ENCODE measurements at regions of chr9 and their contacts with region 1.

Region 1: GRCh38 chr9:128215491-128216404 is 12.6 kb downstream of the DNM1 start:
- DNase-seq: peak; percentile 66
- H3K4me3 ChIP-seq: no peak overlapping the region
- H3K27me3 ChIP-seq: no peaks in the 10 kb centered on the region
- CTCF ChIP-seq: no peak

Region 2: DNA sequence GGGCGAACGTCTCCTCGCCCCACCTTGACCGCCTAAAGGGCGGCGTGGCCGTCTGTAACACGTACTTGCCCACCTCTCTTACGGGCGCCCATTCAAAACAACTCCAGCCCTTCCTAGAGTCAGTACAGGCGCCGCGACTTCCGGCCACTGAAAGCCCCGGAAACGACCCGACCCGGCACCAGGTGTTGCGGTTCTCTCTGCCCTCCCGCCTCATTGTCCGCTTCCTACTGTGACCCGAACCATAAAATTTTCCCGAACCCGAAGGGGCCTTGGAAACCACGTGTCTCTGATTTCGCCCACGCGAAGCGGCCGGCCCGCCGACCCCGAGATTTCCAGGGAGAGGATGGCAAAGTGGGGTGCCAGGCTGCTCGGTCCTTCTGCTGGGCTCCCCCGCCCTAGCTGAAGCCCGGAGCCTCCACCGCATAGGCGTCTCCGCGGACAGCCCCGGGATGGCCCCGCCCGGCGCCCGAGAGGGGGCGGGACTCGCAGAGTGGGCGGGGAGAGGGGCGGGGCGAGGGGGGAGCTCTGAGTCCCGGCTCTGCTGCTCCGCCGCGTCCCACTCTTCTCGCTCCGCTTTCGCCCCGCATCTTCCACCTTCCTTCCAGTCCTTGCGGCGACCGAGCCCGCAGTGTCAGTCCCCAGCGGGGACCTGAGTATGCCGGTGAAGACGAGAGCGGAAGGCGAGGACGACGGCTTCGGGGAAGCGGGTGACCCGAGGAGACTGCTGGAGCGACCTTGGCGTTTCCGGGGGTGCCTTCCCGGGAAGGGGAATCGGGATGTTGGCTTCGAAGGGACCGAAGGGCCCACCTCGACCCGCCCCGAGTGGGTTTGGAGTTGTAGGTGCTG is 87.5 kb before region 1 on chr9:
- CTCF ChIA-PET with region 1: no interaction called
- POLR2A ChIA-PET with region 1: no interaction called
- DNase-seq: peak; percentile 38
- H3K4me3 ChIP-seq: peak overlapping the region; percentile 90
- H3K27me3 ChIP-seq: peaks cover 8% of the 10 kb centered on the region
- CTCF ChIP-seq: no peak

Region 3: DNA sequence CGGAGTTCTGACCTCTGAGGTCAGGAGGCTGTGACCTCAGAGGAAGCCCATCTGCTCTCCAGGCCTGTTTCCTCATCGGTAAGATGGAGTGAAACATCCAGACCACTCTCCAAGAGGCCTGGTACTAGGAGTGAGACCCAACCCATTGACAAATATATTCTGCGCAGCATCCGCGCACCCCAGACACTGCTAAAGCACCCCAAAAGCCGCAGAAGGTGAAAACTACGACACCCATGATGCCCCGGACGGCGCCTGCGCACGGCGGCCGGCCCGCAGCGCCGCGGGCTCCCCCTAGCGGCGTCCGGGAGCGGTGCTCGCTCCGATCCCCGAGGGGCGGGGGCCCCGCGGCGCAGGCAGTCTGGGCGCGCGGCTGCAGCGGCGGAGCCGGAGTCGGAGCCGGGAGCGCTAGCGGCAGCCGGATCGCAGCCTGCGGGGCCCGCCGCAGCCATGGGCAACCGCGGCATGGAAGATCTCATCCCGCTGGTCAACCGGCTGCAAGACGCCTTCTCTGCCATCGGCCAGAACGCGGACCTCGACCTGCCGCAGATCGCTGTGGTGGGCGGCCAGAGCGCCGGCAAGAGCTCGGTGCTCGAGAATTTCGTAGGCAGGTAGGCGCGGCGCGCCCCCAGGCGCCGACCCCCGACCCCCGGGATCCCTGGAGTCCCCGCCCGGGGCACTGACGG is 12.6 kb before region 1 on chr9 and contains the start of gene DNM1:
- CTCF ChIA-PET with region 1: interaction called, 10 read pairs
- POLR2A ChIA-PET with region 1: no interaction called
- DNase-seq: no peak
- H3K4me3 ChIP-seq: peak within 1 kb of the TSS; percentile 61
- H3K27me3 ChIP-seq: no peaks in the 10 kb centered on the region
- CTCF ChIP-seq: peak; percentile 17; the same call in 1 of the 2 replicates
- polyA plus RNA-seq, gene DNM1: 6.4 and 8.4 TPM in 2 replicates

Measured in BJ (cell line).